Psoas muscle (tissue), 8 donors: ENCODE measurements at regions of chr22 and their contacts with region 1.

Region 1: GRCh38 chr22:46105494-46106278 is 44.6 kb upstream of the PPARA start:
- DNase-seq: peak in 1 of 2 donors; percentile 73
- ATAC-seq: peak; percentile 19 to 40 (median 27)
- H3K4me3 ChIP-seq: peak overlapping the region; percentile 19
- H3K27ac ChIP-seq: peak overlapping the region; percentile 93
- H3K4me1 ChIP-seq: peaks cover 94% of the 10 kb centered on the region
- H3K27me3 ChIP-seq: no peaks in the 10 kb centered on the region
- CTCF ChIP-seq: no peak

Region 2: GRCh38 chr22:45602824-45603630 is 502.7 kb before region 1 on chr22:
- intact Hi-C with region 1: no loop called
- DNase-seq: no peak
- ATAC-seq: no peak
- H3K4me3 ChIP-seq: no peak overlapping the region
- H3K27ac ChIP-seq: no peak overlapping the region
- H3K4me1 ChIP-seq: no peaks in the 10 kb centered on the region
- H3K27me3 ChIP-seq: peaks cover 0 to 1% (median 0%) of the 10 kb centered on the region in 3 donors
- CTCF ChIP-seq: no peak

Region 3: DNA sequence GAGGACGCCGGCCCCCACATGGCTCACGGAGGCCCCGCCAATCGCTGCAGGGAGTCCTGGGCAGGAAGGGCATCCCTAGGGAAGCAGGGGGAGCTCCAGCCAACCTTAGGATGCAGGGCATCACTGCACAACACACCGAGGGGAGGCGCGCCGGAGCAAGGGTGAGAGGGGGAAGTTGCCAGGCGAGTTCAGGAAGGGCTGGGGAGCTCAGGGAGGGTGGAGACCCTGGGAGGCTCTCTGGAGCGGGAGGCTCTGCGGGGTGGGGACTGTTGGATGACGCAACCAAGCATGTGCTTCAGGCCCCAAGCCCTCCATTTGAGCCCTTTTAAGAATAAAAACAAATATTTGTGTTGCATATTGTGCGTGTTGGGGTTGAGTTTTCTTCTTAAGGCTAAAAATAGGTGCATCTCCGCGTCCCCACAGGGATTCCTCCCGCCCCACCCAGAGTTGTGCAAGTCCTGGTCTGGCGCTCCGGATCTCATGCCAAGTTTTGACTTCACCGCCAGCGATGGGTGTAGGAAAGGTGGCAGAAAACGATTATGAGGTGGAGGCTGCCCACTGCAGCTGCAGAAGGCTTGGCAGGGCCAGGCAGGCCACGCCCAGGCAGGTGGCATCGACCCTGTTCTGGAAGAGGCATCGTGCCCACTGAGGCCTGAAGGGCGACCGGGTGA is 193.9 kb before region 1 on chr22:
- intact Hi-C with region 1: no loop called
- DNase-seq: peak; percentile 57 to 83
- ATAC-seq: peak; percentile 67 to 93 (median 83)
- H3K4me3 ChIP-seq: no peak overlapping the region
- H3K27ac ChIP-seq: no peak overlapping the region
- H3K4me1 ChIP-seq: peaks cover 10% of the 10 kb centered on the region
- H3K27me3 ChIP-seq: peaks cover 0 to 16% (median 4%) of the 10 kb centered on the region in 3 donors
- CTCF ChIP-seq: no peak

Region 4: GRCh38 chr22:46090036-46090591 is 15.6 kb before region 1 on chr22:
- intact Hi-C with region 1: loop called (anchors 1 to 2 kb)
- DNase-seq: peak; percentile 69 to 90
- ATAC-seq: peak; percentile 51 to 64 (median 58)
- H3K4me3 ChIP-seq: peak overlapping the region; percentile 48
- H3K27ac ChIP-seq: peak overlapping the region; percentile 98
- H3K4me1 ChIP-seq: peaks cover 98% of the 10 kb centered on the region
- H3K27me3 ChIP-seq: no peaks in the 10 kb centered on the region
- CTCF ChIP-seq: no peak

Region 5: DNA sequence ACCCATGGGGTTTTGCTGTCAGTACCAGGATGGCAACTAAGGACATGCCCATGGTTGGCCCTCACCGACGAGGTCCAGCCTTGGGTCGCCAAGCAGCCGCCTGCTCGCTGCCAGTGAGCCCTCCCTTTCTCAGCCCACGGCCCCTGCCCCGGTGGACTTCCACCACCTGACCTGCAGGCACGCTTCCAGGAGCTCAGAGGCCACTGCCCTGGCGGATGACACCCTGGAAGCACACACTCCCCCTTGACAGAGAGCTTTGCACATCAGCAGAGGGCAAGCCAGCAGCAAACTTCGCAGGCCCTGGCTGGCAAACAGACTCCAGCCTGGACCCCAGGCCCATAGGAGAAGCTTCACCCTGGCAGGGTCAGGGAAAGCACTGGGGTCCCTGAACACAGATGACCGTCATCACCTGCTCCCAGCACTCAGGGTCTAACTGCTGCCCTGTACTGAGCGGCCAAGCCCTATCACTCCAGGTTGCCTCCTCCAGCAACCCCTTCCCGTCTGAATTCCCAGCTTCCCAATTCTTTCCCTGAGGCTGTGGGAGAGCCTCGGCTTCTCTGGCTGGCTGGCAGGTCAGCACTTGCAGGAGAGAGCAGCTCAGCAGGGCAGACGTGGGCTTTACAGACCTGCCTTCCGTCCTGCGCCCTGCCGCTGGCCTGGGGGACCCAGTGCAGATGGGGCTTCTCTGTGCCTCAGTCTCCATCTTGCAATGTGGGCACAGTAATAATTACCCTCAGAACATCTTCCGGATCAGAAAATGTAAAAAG is 42.0 kb after region 1 on chr22:
- intact Hi-C with region 1: no loop called
- DNase-seq: peak in 1 of 2 donors; percentile 76
- ATAC-seq: peak in 1 of 4 donors; percentile 2
- H3K4me3 ChIP-seq: peak overlapping the region; percentile 2
- H3K27ac ChIP-seq: peak overlapping the region; percentile 53
- H3K4me1 ChIP-seq: peaks cover 44% of the 10 kb centered on the region
- H3K27me3 ChIP-seq: no peaks in the 10 kb centered on the region
- CTCF ChIP-seq: no peak

Region 6: DNA sequence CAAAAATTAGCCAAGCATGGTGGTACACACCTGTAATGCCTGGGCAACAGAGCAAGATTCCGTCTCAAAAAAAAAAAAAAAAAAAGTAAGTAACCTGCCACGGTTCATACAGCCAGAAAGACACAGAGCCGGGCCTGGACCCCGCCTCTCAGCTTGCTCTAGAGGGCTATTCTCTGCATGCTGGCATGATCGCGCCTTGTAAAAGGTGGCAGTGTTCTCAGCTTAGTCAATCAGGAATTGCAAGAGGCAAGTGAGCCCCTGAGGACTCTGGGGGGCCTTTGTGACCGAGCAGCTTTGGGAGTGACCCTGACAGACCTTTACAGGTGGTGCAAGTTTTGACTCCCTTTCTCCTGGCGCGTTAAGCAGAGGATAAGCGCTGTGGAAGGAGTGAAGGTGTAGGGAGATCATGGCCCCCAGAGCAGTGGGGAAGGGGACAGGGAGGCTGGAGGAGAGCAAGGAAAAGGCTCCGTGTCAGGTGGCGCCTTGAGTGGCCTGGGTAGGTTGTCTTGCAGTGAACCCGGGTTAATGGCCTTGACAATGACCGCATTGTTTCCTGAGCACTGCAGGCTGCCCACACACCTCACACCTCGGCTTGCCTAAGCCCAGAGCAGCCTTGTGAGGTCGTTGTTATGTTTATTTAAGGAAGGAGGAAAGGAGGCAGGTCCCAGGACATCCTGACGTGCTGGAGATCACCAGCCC is 95.5 kb after region 1 on chr22:
- intact Hi-C with region 1: no loop called
- DNase-seq: no peak
- ATAC-seq: no peak
- H3K4me3 ChIP-seq: no peak overlapping the region
- H3K27ac ChIP-seq: no peak overlapping the region
- H3K4me1 ChIP-seq: peaks cover 5% of the 10 kb centered on the region
- H3K27me3 ChIP-seq: no peaks in the 10 kb centered on the region
- CTCF ChIP-seq: no peak